Activated CD4-positive, alpha-beta T cell treated with anti-CD3 and anti-CD28 coated beads, Interleukin-2, amount 10 ng/mL, durations not matched to agents 24 days and 14 days (primary cell): ENCODE measurements at regions of chr1 and their contacts with region 1.

Region 1: GRCh38 chr1:26284597-26285360 is 4.9 kb downstream of the SH3BGRL3 start:
- DNase-seq: peak; percentile 96
- H3K4me3 Mint-ChIP-seq: peak overlapping the region; percentile 88
- H3K27ac Mint-ChIP-seq: peak overlapping the region; percentile 98
- H3K4me1 Mint-ChIP-seq: peaks cover 82% of the 10 kb centered on the region
- H3K27me3 Mint-ChIP-seq: no peaks in the 10 kb centered on the region

Region 2: GRCh38 chr1:26177182-26177684 is 107.5 kb before region 1 on chr1 and contains the start of gene CNKSR1:
- intact Hi-C with region 1: no loop called
- DNase-seq: no peak
- H3K4me3 Mint-ChIP-seq: peak within 1 kb of the TSS; percentile 68
- H3K27ac Mint-ChIP-seq: peak within 1 kb of the TSS; percentile 29
- H3K4me1 Mint-ChIP-seq: peaks cover 8% of the 10 kb centered on the region
- H3K27me3 Mint-ChIP-seq: no peaks in the 10 kb centered on the region
- total RNA-seq, gene CNKSR1: 4.0 and 6.2 TPM in 2 replicates

Region 3: DNA sequence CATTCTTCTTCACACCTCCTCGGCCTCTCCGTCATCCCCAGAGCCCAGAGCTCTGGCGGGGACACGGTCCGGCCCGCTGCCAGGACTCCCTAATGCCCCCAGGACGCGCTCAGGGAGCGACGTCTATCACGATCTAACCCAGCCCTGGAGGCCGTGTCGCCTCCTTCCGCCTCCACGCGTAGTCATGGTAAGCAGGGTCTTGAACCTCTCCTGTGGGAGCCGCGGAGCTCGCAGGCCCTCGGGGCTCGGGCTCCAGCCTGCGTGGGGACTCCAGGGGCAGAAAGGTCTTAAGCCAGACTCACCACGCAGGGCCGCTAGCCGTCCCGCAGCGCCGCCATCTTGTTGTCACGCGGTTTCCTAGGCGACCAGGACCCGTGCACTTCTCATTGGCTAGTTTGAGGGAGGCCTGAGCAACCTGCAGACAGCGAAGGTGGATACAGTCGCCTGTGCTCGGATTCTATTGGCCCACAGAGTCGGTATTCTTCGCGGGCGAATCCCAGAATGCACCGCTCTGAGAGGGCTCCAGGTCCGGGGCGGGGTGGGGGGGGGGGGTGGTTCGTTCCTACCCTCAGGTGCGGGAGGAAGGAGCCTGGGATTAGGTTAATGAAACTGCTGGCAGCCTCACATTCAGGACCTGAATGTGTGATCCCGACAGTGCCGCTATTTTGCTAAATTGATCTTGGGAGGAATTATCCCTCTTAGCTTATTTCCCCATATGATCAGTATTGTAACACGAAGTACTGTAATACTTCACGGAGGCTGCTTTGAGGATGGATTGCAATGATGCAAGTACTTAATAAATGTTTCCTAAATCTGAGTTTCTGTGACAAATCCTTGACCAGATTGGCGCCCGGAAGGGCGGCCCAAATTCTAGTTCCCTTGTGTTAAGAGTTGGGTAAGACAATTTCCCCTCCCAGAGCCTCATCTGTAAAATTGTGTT is 21.8 kb after region 1 on chr1 and contains the start of gene UBXN11:
- intact Hi-C with region 1: loop called (anchors 1 kb)
- DNase-seq: peak; percentile 98
- H3K4me3 Mint-ChIP-seq: peak within 1 kb of the TSS; percentile 98
- H3K27ac Mint-ChIP-seq: peak within 1 kb of the TSS; percentile 93
- H3K4me1 Mint-ChIP-seq: peaks cover 30% of the 10 kb centered on the region
- H3K27me3 Mint-ChIP-seq: no peaks in the 10 kb centered on the region
- total RNA-seq, gene UBXN11: 17.1 and 19.0 TPM in 2 replicates

Region 4: GRCh38 chr1:26363549-26364448 is 79.0 kb after region 1 on chr1:
- intact Hi-C with region 1: loop called (anchors 2 kb)
- DNase-seq: peak; percentile 96
- H3K4me3 Mint-ChIP-seq: no peak overlapping the region
- H3K27ac Mint-ChIP-seq: peak overlapping the region; percentile 11
- H3K4me1 Mint-ChIP-seq: peaks cover 39% of the 10 kb centered on the region
- H3K27me3 Mint-ChIP-seq: peaks cover 18% of the 10 kb centered on the region